ENCODE measurements at regions of chr18 and their contacts with region 1.

Region 1: DNA sequence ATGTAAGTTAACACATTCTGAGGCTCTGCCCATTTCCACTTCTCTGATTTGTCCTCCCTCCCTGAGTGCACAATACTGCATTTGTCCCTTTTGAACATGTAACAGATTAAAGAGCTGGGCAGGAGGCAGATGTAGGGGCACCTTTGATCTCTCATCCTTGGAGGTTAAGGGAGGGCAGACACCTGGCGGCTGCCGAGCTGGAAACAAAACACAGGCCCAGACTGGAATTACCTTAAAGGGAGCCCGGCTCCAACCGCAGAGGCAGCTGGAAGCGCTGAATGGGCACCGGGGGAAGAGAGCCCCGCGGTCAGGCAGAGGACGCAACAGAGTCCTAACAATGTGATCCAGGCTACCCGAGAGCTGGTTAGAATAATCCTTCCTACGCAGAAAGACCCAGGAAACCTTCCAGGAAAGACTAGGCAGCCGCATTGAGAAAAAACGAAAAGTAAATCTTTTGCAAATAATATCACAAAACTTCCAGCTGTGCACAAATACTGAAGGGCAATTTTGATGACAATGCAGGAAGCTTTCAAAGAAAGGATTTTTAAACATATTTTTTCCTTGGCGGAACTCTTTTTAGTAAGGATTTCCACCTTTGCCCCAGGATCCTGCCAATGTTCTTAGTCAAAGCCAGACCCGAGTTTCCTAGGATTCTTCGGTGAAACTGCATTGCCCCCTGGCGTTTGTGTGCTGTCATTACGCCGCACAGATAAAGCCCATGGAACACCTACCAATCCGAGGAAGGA is 216.0 kb downstream of the TGIF1 start:
- DNase-seq: peak; percentile 81
- H3K4me3 Mint-ChIP-seq: no peak overlapping the region
- H3K27ac Mint-ChIP-seq: no peak overlapping the region
- H3K4me1 Mint-ChIP-seq: peaks cover 23% of the 10 kb centered on the region
- H3K27me3 Mint-ChIP-seq: no peaks in the 10 kb centered on the region

Region 2: GRCh38 chr18:3297025-3297984 is 368.6 kb before region 1 on chr18:
- CTCF ChIA-PET with region 1: interaction called, 61 read pairs
- POLR2A ChIA-PET with region 1: interaction called, 6 read pairs
- intact Hi-C with region 1: loop called (anchors 5 kb)
- DNase-seq: peak; percentile 97
- H3K4me3 Mint-ChIP-seq: peak overlapping the region; percentile 87
- H3K27ac Mint-ChIP-seq: peak overlapping the region; percentile 52
- H3K4me1 Mint-ChIP-seq: peaks cover 8% of the 10 kb centered on the region
- H3K27me3 Mint-ChIP-seq: peaks cover 17% of the 10 kb centered on the region

Region 3: DNA sequence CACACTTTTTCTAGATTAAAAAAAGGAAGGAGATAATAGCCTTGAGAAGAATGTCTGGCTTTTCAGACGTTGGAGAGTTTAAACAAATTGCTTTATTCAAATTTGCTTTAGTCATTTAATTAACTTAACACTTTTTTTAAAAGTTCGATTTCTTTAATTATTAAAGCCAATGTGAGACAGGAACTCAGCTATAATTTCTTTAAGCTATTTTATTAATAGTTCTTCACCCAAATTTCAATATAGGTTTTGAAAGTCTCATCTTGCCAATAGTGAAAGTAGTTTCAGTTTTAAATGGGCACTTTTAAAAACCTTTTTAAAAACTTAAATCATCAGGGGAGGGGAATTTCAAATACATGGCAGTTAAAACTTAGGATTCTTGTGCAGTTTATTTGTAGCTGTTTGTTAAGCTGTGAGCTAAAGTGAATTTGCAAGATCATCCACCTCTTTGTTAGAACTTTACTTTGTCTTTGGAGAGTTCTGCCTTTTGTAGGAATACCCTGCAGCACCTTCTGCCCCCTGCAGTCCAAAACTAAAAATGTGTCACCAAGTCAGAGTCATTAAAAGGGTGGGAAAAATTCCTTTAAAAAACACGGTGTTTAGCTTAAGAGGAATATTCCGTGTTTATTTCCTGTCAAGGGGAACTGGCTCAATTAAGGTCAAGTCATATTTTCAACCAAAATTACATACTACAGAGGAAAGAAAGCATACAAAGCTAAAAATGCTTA is 211.4 kb before region 1 on chr18:
- CTCF ChIA-PET with region 1: interaction called, 46 read pairs
- POLR2A ChIA-PET with region 1: interaction called, 3 read pairs
- intact Hi-C with region 1: loop called (anchors 2 kb)
- DNase-seq: no peak
- H3K4me3 Mint-ChIP-seq: peak overlapping the region; percentile 86
- H3K27ac Mint-ChIP-seq: peak overlapping the region; percentile 100
- H3K4me1 Mint-ChIP-seq: peaks cover 62% of the 10 kb centered on the region
- H3K27me3 Mint-ChIP-seq: no peaks in the 10 kb centered on the region

Region 4: GRCh38 chr18:3585656-3586509 is 80.1 kb before region 1 on chr18:
- CTCF ChIA-PET with region 1: interaction called, 21 read pairs
- POLR2A ChIA-PET with region 1: no interaction called
- intact Hi-C with region 1: no loop called
- DNase-seq: peak; percentile 86
- H3K4me3 Mint-ChIP-seq: no peak overlapping the region
- H3K27ac Mint-ChIP-seq: peak overlapping the region; percentile 69
- H3K4me1 Mint-ChIP-seq: peaks cover 45% of the 10 kb centered on the region
- H3K27me3 Mint-ChIP-seq: no peaks in the 10 kb centered on the region

Region 5: GRCh38 chr18:3631887-3632286 is 34.1 kb before region 1 on chr18:
- CTCF ChIA-PET with region 1: interaction called, 12 read pairs
- POLR2A ChIA-PET with region 1: no interaction called
- intact Hi-C with region 1: no loop called
- DNase-seq: no peak
- H3K4me3 Mint-ChIP-seq: no peak overlapping the region
- H3K27ac Mint-ChIP-seq: no peak overlapping the region
- H3K4me1 Mint-ChIP-seq: peaks cover 27% of the 10 kb centered on the region
- H3K27me3 Mint-ChIP-seq: no peaks in the 10 kb centered on the region